Heart left ventricle (tissue), 16 donors: ENCODE measurements at regions of chr11 and their contacts with region 1.

Region 1: GRCh38 chr11:19240420-19241259 is at the start of gene E2F8:
- DNase-seq: peak; percentile 95 to 96 (median 95)
- ATAC-seq: peak; percentile 95 to 98 (median 97)
- H3K4me3 ChIP-seq: peak within 1 kb of the TSS; percentile 52 to 86 (median 68)
- H3K27ac ChIP-seq: peak within 1 kb of the TSS in 8 of 12 donors; percentile 41 to 76 (median 63)
- H3K4me1 ChIP-seq: peaks cover 0 to 43% (median 19%) of the 10 kb centered on the region in 12 donors
- H3K27me3 ChIP-seq: peaks cover 0 to 41% (median 22%) of the 10 kb centered on the region in 9 donors
- CTCF ChIP-seq: no peak
- POLR2A ChIP-seq: no peak
- total RNA-seq, gene E2F8: 2.3 to 6.6 (median 4.2) TPM

Region 2: DNA sequence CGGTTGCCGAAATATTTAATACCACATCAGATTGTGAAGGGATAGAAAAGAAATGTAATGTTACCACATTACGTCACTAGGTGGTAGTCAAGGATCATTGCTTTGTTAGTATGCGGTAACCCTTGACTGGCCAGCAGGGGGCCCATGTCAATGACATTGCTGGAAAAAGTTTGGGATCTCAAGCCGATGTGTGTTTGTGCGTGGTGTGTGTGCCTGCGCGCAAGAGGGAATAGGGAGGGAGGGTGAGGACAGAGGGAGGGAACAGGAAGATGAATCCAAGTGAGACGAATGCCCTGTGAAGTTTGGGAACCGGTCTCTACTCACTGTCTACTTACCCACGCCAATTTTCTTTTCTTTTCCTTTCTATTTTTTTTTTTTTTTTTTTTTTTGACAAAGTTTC is 169.4 kb before region 1 on chr11:
- intact Hi-C with region 1: loop called in 2 of 10 experiments (anchors 5 to 10 kb)
- DNase-seq: peak; percentile 43 to 73 (median 61)
- ATAC-seq: peak; percentile 85 to 96 (median 92)
- H3K4me3 ChIP-seq: peak overlapping the region in 4 of 12 donors; percentile 11 to 25 (median 16)
- H3K27ac ChIP-seq: no peak overlapping the region
- H3K4me1 ChIP-seq: peaks cover 0 to 4% (median 0%) of the 10 kb centered on the region in 12 donors
- H3K27me3 ChIP-seq: peaks cover 0 to 23% (median 0%) of the 10 kb centered on the region in 9 donors
- CTCF ChIP-seq: peak; percentile 81 to 96 (median 90)
- POLR2A ChIP-seq: no peak

Region 3: DNA sequence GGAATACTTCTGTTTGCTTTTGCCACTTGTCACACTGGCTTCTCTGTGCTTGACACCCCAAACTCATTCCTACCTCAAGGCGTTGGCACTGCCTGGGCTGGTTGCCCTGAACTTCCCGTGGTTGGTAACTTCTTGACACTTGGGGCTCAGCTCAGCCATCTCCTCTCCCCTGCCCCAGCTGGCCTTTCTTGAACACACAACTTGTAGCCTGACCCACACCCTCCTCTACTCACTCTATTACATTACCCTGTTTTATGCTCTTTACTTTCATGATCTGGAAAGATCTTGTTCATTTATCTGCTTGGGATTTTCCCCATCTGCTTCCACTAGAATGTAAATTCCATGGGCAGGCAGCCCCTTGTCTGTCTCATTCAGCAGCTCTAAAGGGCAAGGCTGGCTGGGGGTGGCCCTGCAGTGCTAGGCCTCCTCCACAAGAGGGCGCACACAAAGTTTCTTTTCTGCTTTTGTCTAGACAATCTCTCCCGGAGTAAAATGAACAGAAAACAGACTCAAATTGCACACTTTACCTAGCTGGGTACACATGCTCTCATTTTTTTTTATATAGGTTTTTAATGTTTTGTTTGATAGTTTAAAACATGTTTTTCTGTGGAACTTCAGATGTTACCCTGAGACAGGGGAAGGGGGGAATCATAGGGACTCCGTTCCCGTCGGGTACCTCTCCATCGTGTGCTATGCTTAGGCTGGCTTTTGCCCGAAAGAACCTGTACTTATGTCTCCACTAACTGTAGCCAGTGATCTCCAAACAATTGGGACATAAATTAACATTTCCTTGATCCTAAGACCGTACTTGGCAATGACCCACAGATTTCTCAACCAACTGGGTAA is 163.7 kb before region 1 on chr11:
- intact Hi-C with region 1: loop called in 2 of 10 experiments (anchors 5 to 10 kb)
- DNase-seq: peak in 2 of 5 donors; percentile 34 to 38
- ATAC-seq: peak; percentile 54 to 73 (median 66)
- H3K4me3 ChIP-seq: peak overlapping the region in 1 of 12 donors; percentile 10
- H3K27ac ChIP-seq: no peak overlapping the region
- H3K4me1 ChIP-seq: peaks cover 0 to 3% (median 0%) of the 10 kb centered on the region in 12 donors
- H3K27me3 ChIP-seq: no peaks in the 10 kb centered on the region
- CTCF ChIP-seq: peak; percentile 88 to 99 (median 94)
- POLR2A ChIP-seq: no peak

Region 4: DNA sequence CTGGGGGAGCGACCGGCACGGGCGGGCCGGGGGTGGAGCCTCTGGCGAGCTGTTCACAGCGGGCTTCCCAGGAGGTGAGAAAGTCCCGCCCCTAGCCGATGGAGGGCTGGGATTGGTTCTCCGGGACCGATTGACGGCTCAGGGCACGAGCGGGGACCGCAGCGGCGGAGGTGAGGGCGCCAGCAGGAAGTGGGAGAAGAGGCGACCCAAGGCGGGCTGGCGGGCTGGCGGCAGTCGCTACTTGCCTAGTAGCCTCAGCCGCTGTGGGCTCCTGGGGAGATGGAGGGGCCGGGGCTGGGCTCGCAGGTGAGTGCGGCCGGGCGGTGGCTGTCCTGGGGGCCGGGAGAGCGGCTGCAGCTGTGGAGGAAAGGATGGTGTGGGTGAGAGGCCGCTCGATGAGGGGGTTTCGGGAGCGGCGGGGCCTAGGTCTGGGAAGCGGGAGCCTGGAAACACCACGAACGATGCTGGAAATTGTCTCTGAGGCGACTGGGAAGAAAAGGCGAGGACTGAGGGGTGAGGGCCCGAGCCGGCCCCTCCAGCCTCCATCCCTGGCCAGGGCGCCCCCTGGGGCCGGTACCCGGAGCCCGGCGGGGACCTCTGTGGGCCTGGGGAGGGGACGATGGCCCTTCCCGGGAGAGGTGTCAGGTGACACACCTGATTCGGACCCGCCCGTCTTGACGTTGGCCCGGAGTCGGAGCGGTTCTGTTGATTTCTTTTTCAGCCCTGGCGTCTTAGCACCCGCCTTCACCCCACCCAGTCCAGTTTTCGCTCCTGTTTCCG is 123.5 kb before region 1 on chr11 and contains the start of gene ZDHHC13:
- intact Hi-C with region 1: loop called in 1 of 10 experiments (anchors 10 kb)
- DNase-seq: peak; percentile 93 to 96 (median 94)
- ATAC-seq: peak; percentile 98 to 100 (median 99)
- H3K4me3 ChIP-seq: peak within 1 kb of the TSS; percentile 64 to 94 (median 80)
- H3K27ac ChIP-seq: peak within 1 kb of the TSS in 8 of 12 donors; percentile 12 to 62 (median 51)
- H3K4me1 ChIP-seq: peaks cover 0 to 20% (median 6%) of the 10 kb centered on the region in 12 donors
- H3K27me3 ChIP-seq: no peaks in the 10 kb centered on the region
- CTCF ChIP-seq: peak in 8 of 12 donors; percentile 17 to 48 (median 32)
- POLR2A ChIP-seq: peak in 1 of 2 donors; percentile 52
- total RNA-seq, gene ZDHHC13: 6.0 to 12.7 (median 8.9) TPM

Region 5: DNA sequence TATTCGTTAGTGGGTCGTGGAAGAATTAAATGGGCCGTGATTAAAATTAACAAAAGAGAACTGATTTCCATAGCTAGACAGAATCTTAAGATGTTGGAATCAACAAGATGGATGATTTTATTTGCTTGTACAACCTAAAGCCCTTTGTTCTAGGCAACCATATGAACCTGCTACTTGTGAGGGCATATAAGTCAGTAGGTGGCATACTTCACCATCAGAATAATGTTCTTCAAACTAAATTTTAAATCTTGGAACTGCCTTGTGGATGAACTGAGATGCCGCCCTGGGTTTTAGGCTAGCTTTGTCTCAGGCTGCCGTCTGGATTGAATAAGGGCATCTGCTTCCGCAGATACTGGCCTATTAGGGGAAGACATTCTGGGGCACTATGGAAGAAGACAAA is 79.8 kb before region 1 on chr11:
- intact Hi-C with region 1: loop called in 1 of 10 experiments (anchors 10 kb)
- DNase-seq: no peak
- ATAC-seq: peak in 1 of 4 donors; percentile 41
- H3K4me3 ChIP-seq: no peak overlapping the region
- H3K27ac ChIP-seq: no peak overlapping the region
- H3K4me1 ChIP-seq: no peaks in the 10 kb centered on the region
- H3K27me3 ChIP-seq: no peaks in the 10 kb centered on the region
- CTCF ChIP-seq: peak in 6 of 12 donors; percentile 19 to 42 (median 24)
- POLR2A ChIP-seq: no peak

Region 6: DNA sequence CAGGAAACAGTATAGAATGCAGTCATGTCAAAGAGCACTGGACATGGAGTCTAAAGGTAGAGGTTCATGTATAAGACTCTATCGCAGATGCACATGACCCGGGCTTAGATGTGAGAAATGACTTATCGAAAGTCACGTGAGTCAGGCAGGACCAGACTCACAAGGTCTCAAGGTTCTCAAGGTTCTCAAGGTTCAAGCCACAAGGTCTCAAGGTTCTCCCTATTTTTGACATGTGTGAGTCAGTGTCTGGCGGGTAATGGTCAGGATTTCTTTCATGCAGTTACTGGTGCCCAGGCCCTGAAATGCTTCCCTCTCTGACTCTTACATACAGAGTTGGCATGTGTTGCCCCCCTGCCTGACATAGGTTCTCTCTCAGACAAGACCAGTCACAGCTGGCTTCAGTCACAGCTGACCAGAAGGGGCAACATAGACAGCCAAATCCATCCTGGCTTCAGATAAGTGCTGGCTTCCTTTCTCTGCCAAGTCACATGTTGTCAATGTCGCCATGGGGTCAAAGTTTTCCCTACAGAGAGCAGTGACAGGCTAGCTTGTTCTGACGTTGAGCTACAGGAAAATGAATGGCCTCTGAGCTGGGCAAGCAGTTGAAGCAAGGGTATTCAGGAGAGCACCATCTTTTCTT is 49.0 kb before region 1 on chr11:
- intact Hi-C with region 1: loop called in 2 of 10 experiments (anchors 5 kb)
- DNase-seq: peak in 4 of 5 donors; percentile 61 to 77 (median 67)
- ATAC-seq: peak; percentile 68 to 85 (median 84)
- H3K4me3 ChIP-seq: no peak overlapping the region
- H3K27ac ChIP-seq: peak overlapping the region in 11 of 12 donors; percentile 26 to 96 (median 82)
- H3K4me1 ChIP-seq: peaks cover 0 to 80% (median 6%) of the 10 kb centered on the region in 12 donors
- H3K27me3 ChIP-seq: no peaks in the 10 kb centered on the region
- CTCF ChIP-seq: peak in 3 of 12 donors; percentile 10 to 22 (median 22)
- POLR2A ChIP-seq: no peak

Region 7: GRCh38 chr11:19200410-19201201 is 40.0 kb before region 1 on chr11:
- intact Hi-C with region 1: loop called in 3 of 10 experiments (anchors 2 to 5 kb)
- DNase-seq: peak in 2 of 5 donors; percentile 52 to 56
- ATAC-seq: peak in 2 of 4 donors; percentile 6 to 9
- H3K4me3 ChIP-seq: peak overlapping the region; percentile 15 to 70 (median 56)
- H3K27ac ChIP-seq: peak overlapping the region; percentile 72 to 96 (median 90)
- H3K4me1 ChIP-seq: peaks cover 0 to 10% (median 1%) of the 10 kb centered on the region in 12 donors
- H3K27me3 ChIP-seq: no peaks in the 10 kb centered on the region
- CTCF ChIP-seq: no peak
- POLR2A ChIP-seq: no peak